Kidney (tissue), 22 donors: ENCODE measurements at regions of chr14 and their contacts with region 1.

Region 1: GRCh38 chr14:104650057-104650981 is 39.1 kb upstream of the INF2 start:
- DNase-seq: peak; percentile 72 to 89 (median 84)
- H3K4me3 ChIP-seq: peak overlapping the region in 1 of 3 donors; percentile 18
- H3K27ac ChIP-seq: no peak overlapping the region
- H3K4me1 ChIP-seq: peaks cover 0 to 3% (median 0%) of the 10 kb centered on the region in 3 donors
- H3K27me3 ChIP-seq: no peaks in the 10 kb centered on the region
- CTCF ChIP-seq: peak; percentile 91

Region 2: DNA sequence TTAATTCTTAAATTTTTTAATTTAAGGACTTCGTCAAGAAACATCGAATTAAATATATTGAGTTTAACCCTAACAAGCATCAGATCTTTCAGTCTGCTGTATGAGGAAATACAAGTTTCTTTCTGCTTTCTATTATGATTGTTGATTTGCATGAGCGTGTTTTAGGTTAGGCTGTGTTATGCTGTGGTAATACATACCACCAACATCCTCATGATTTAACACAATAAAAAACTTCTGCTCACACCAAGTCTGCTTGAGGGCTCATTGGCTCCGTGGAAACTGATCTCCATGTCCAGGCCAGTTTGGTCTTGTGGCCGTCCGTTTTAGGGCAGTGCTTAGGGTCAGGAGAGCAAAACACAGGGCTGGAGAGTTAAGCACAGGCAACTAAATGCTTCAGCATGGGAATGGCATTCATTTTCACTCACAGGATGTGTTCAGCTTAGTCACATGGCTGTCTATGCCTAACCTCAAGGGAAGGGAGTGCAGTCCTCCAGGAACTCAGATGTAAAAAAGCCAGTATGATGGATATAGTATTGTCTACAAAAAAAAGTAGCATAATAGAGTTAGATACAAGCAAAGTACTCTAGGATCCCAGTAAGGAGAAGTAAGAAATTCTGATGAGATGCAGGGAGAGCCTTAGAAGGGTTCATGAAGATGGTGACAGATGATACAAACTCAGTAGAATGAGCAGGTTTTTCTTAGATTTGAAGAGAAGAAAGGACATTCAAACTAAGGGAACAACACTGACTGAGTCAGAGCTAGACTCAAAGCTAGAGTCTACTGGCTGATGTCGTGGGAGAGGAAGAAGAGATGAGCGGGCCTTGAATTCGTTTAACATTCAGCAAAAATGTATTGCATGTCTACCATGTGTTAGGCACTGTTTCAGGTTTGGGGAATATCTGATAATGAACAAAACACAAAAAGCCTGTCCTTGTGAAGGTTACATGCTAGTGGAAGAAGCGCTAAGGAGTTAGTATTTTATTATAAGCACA is 1248.8 kb before region 1 on chr14:
- intact Hi-C with region 1: no loop called
- DNase-seq: peak in 2 of 5 donors; percentile 46 to 50
- H3K4me3 ChIP-seq: no peak overlapping the region
- H3K27ac ChIP-seq: peak overlapping the region; percentile 32 to 56
- H3K4me1 ChIP-seq: peaks cover 5 to 37% (median 20%) of the 10 kb centered on the region in 3 donors
- H3K27me3 ChIP-seq: no peaks in the 10 kb centered on the region
- CTCF ChIP-seq: no peak

Region 3: DNA sequence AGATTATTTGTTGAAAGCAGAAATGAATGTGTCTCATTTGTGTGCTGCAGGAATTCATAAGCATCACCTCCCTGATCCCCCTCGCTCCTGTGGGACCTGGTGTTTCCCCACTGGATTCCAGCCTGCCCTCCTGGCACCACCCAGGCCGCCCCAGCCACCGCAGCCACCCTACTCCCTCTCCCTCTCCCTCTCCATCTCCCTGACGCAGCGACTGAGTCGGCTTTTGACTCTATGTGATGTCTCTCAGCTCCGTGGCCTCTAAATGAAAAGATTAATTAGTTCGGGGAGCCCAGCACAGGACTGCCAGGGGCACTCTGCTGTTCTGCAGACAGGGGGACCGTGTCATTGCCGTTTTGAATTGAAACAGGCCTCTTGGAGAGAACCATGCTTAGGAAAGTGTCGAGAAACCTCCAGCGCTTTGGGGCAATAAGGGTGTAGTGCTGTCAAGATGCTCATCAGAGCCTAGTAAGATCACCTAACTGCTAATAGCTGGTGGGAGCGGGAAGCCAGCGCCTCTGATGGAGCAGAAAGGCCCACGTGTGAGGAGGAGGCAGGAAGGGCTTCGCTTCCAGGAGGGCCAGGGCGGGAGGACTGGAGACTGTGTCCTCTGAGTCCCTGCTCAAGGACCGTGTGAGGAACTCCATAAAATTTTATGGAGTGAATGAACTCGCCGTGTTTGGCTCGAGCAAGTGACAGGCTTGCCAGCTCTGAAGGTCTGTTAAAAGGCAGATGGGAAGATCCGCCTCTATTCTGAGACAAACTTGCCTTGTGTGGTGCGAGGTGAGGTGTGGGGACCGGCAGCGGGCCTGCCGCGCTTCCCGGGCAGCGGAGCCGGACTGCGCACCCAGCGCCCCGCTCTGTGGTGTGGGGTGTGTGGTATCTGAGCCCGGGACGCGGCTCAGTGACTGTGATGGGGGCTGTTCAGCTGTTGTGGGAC is 228.2 kb before region 1 on chr14:
- intact Hi-C with region 1: no loop called
- DNase-seq: peak in 4 of 5 donors; percentile 72 to 91 (median 86)
- H3K4me3 ChIP-seq: no peak overlapping the region
- H3K27ac ChIP-seq: no peak overlapping the region
- H3K4me1 ChIP-seq: no peaks in the 10 kb centered on the region
- H3K27me3 ChIP-seq: no peaks in the 10 kb centered on the region
- CTCF ChIP-seq: no peak

Region 4: DNA sequence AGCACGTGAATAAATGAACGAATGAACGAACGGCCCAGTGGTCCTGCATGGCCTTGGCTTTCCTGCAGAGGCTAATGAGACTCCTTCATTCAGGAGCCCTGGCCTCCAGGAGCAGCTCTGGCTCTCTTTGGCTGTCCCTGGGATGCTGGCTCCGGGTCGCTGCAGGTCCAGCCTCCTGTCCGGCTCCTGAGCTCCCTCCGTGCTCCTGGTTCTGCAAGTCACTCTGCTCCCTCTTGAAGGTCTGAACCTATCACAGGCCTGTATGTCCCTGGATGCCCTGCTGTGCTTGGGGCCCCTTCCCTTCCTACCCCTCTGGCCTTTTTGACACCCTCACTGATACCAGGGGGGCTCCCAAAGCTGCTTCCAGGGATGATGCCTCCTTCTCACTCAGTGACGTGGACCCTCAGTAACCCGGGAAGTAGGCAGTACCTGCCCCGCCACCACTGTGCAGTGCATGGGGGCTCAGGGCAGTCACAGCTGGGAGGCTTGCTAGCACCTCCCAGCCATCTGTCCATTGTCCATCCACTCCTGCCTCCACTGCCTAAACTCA is 204.4 kb before region 1 on chr14:
- intact Hi-C with region 1: no loop called
- DNase-seq: peak in 1 of 5 donors; percentile 21
- H3K4me3 ChIP-seq: no peak overlapping the region
- H3K27ac ChIP-seq: no peak overlapping the region
- H3K4me1 ChIP-seq: no peaks in the 10 kb centered on the region
- H3K27me3 ChIP-seq: no peaks in the 10 kb centered on the region
- CTCF ChIP-seq: no peak

Region 5: DNA sequence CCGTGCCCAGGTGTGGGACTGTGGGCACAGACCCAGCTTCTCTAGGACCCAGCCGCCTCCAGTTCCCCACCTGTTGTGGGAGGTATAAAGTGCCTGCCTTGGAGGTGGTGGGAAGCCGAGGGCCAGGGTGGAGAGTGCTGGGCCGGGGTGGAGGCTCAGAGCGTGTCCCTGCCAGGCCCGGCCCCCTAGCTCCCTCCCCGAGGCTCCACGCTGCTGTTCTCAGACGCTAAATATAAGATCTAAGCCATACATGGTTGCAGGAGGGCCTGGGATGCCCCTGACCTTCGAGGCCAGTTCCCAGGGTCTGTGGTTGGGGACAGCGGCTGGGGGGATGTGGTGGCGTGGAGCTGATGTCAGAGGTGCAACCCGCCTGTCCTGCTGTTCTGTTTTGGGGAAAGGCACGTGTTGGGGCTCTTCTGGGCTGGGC is 49.9 kb after region 1 on chr14:
- intact Hi-C with region 1: loop called (anchors 5 kb)
- DNase-seq: no peak
- H3K4me3 ChIP-seq: no peak overlapping the region
- H3K27ac ChIP-seq: no peak overlapping the region
- H3K4me1 ChIP-seq: peaks cover 0 to 16% (median 0%) of the 10 kb centered on the region in 3 donors
- H3K27me3 ChIP-seq: no peaks in the 10 kb centered on the region
- CTCF ChIP-seq: no peak